ENCODE measurements at regions of chr12 and their contacts with region 1.

Region 1: DNA sequence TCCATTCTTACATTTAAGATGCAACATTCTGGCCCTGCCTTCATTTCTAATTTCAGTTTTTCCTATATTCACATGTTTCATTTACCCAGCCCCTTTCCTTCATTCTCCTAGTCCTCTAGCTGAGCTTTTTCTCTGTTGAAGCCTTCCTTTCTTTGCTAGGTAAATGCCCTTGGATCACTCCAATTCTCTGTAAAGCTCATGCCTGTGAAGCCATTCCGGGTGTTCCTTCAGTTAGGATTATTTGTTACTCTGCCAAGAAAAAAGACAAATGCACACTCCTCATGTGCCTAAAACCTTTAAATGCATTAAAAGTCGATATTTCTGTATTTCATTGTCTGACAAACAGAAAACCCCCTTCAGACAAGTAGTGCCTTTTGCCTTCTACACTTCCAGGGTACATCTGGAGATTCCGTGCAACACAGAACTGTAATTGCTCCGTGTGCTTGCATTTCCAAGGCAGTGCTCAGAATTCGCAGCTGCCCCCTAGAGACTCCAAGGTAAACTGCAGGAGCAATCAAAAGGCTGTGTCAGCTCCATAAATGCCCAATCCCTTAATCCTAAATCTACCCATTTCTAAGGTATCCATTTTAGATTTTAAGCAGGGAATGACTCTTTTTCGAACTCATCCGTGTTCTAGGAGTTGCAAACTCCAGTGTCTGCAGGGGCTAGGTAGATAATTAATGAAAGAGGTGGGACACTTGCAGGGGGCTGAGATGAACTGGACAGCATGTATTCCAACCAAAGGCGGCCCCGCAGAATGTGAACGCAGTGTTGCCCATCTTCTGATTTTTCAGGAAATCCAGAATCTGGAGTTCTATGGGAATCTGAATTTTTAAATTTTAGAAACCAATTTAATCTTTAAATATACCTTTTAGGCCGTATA is 320.2 kb downstream of the GRIN2B start:
- DNase-seq: no peak
- H3K4me3 ChIP-seq: no peak overlapping the region
- H3K27ac ChIP-seq: no peak overlapping the region
- H3K4me1 ChIP-seq: peaks cover 0 to 5% (median 2%) of the 10 kb centered on the region in 6 donors
- H3K27me3 ChIP-seq: no peaks in the 10 kb centered on the region
- CTCF ChIP-seq: peak; percentile 35 to 81 (median 63)
- POLR2A ChIP-seq: no peak

Region 2: DNA sequence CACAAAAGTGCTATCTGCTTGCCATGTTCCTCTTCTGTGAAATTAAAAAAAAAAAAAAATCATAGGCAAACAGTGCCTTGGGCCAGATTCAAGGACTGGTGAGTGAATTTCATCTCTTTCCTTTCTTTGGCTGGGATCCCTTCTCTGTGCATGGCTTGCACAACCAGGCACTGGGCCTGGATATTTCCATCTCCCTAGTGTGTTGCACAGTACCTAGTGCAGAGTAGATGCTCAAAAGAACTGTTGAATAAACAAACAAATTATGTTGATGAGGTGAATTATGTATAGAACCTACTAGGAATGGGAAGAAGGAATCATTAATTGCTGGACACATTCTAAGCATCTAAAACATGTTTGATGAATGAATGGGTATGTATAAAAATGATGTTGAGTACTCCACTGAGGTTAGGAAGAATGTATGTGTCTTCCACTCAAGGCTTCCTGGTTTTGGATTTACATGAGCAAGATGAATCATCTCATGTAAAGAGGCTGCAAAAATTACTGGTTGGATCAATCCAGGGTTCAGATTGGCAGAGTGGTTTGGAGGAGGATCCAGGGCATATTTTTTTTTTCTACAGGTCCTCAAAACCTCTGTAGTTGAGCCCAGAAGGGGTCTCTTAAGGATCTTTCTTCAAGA is 371.5 kb before region 1 on chr12:
- intact Hi-C with region 1: loop called (anchors 10 kb)
- DNase-seq: no peak
- H3K4me3 ChIP-seq: no peak overlapping the region
- H3K27ac ChIP-seq: no peak overlapping the region
- H3K4me1 ChIP-seq: no peaks in the 10 kb centered on the region
- H3K27me3 ChIP-seq: peaks cover 0 to 4% (median 0%) of the 10 kb centered on the region in 7 donors
- CTCF ChIP-seq: no peak
- POLR2A ChIP-seq: no peak

Region 3: DNA sequence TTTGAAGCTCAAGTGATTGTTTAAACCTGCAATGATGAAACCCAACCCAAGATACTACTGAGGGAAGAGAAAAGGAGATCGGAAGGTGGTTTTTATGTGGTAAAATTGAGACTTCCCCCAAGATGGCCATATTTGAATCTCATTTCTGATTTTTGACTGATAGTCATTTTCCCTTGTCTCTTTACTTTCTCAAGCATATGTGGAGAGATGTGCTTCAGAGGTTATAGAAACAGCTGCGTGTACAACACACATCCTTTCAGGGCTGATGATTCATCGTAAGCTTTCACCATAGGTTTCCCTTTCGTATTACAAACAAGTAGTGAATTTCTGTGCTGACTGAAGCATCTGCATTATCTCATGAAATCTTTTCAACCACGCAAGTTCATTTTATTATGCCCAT is 188.6 kb before region 1 on chr12:
- intact Hi-C with region 1: no loop called
- DNase-seq: no peak
- H3K4me3 ChIP-seq: no peak overlapping the region
- H3K27ac ChIP-seq: no peak overlapping the region
- H3K4me1 ChIP-seq: no peaks in the 10 kb centered on the region
- H3K27me3 ChIP-seq: peaks cover 0 to 9% (median 0%) of the 10 kb centered on the region in 7 donors
- CTCF ChIP-seq: no peak
- POLR2A ChIP-seq: no peak

Region 4: GRCh38 chr12:13595536-13596443 is 65.5 kb before region 1 on chr12:
- intact Hi-C with region 1: no loop called
- DNase-seq: no peak
- H3K4me3 ChIP-seq: no peak overlapping the region
- H3K27ac ChIP-seq: no peak overlapping the region
- H3K4me1 ChIP-seq: no peaks in the 10 kb centered on the region
- H3K27me3 ChIP-seq: no peaks in the 10 kb centered on the region
- CTCF ChIP-seq: no peak
- POLR2A ChIP-seq: no peak

Measured in spleen (tissue), 13 donors.